ENCODE measurements at regions of chr3 and their contacts with region 1.

Region 1: DNA sequence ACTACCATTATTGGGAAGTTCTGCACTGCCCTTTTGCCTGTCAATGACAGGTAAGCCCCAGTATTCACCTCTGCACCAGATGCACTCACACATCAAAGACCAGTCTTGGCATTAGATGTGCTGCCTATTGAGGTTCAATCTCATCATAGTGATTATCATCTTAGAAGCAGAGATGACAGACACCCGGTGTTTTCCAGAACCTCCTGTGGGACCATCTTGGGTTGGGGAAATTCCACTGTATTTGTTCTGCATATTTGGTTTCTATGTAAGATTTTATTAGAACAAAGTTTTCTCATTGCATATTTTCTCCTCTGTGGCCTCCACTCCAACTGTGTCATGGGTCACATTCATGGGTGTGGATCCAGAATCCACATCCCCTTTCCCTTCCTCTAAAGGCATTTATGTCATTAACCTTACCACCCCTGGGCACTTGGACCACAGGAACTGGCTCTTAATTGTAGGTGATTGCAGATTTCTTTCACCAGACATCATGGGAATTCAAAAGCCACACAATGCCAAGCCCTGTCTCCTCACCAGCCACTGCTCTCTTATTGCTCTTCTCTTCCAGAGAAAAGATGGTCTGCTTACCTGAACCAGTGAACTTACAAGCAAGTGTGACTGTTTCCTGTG is 31.2 kb downstream of the PLA1A start:
- DNase-seq: peak; percentile 57
- ATAC-seq: peak; percentile 67
- H3K4me3 ChIP-seq: no peak overlapping the region
- H3K27ac ChIP-seq: peak overlapping the region; percentile 43
- H3K4me1 ChIP-seq: peaks cover 34% of the 10 kb centered on the region
- H3K27me3 ChIP-seq: no peaks in the 10 kb centered on the region
- CTCF ChIP-seq: no peak

Region 2: GRCh38 chr3:119359476-119360326 is 269.2 kb before region 1 on chr3:
- CTCF ChIA-PET with region 1: no interaction called
- POLR2A ChIA-PET with region 1: no interaction called
- intact Hi-C with region 1: no loop called
- DNase-seq: no peak
- ATAC-seq: no peak
- H3K4me3 ChIP-seq: no peak overlapping the region
- H3K27ac ChIP-seq: no peak overlapping the region
- H3K4me1 ChIP-seq: no peaks in the 10 kb centered on the region
- H3K27me3 ChIP-seq: no peaks in the 10 kb centered on the region
- CTCF ChIP-seq: no peak

Region 3: GRCh38 chr3:119579366-119580165 is 49.4 kb before region 1 on chr3 and contains the start of gene ADPRH:
- CTCF ChIA-PET with region 1: no interaction called
- POLR2A ChIA-PET with region 1: no interaction called
- intact Hi-C with region 1: loop called (anchors 5 kb)
- DNase-seq: peak; percentile 82
- ATAC-seq: peak; percentile 92
- H3K4me3 ChIP-seq: peak within 1 kb of the TSS; percentile 70
- H3K27ac ChIP-seq: peak within 1 kb of the TSS; percentile 43
- H3K4me1 ChIP-seq: peaks cover 15% of the 10 kb centered on the region
- H3K27me3 ChIP-seq: no peaks in the 10 kb centered on the region
- CTCF ChIP-seq: no peak
- total RNA-seq, gene ADPRH: 4.7 and 5.6 TPM in 2 replicates